Dorsolateral prefrontal cortex (tissue), 120 donors: ENCODE measurements at regions of chr13 and their contacts with region 1.

Region 1: DNA sequence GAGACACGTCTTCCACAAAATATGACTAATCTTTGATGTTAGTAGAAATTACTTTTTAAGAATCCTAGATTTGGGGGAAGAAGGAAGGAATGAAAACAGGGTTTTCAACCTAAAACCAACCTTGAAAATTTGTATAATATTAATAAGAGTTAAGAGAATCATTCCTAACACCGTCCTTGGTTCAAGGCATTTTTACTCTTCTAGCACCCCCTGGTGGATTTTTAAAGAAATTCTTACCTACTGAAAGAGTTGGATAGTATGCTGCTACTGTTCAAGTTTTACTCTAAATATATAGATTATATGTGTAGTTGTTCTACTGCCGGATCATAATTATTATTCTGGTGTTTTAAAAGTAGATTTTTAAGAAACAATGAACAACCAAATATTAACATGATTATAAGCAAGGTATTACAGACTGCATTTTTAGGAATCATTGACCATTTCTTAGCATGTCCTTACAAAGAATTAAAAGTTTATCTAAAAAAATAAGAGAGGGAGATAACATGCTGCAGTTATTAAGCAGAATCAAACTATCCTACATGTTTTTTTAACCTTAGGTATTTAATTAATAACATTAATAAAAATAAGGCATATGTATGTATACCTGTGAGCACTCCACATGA is 7.4 kb upstream of the SLITRK6 start:
- DNase-seq: no peak
- H3K4me3 ChIP-seq: peak overlapping the region in 1 of 59 donors; percentile 24
- H3K27ac ChIP-seq: no peak overlapping the region
- H3K27me3 ChIP-seq: peaks cover 0 to 6% (median 0%) of the 10 kb centered on the region in 45 donors
- CTCF ChIP-seq: peak; percentile 65 to 98 (median 86)

Region 2: DNA sequence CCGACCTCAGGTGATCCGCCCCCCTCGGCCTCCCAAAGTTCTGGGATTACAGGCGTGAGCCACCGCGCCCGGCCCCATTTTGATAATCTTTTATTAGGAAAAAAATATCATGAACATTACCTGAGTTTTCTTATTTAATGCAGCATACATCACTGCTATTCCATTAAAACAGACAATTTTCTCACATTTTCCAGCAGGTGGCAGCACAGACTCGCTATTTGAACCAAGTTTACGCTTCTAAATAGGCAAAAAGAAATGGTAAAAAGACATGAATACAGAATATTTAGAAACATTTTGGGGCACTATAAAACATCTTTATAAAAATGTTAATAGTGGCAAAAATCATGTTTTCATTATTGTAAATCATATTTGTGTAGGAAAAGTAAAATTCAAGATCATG is 910.5 kb before region 1 on chr13:
- intact Hi-C with region 1: loop called in 1 of 2 experiments (anchors 5 kb)
- DNase-seq: peak in 2 of 10 donors; percentile 28 to 33
- H3K4me3 ChIP-seq: no peak overlapping the region
- H3K27ac ChIP-seq: no peak overlapping the region
- H3K27me3 ChIP-seq: no peaks in the 10 kb centered on the region
- CTCF ChIP-seq: peak; percentile 60 to 85 (median 74)

Region 3: DNA sequence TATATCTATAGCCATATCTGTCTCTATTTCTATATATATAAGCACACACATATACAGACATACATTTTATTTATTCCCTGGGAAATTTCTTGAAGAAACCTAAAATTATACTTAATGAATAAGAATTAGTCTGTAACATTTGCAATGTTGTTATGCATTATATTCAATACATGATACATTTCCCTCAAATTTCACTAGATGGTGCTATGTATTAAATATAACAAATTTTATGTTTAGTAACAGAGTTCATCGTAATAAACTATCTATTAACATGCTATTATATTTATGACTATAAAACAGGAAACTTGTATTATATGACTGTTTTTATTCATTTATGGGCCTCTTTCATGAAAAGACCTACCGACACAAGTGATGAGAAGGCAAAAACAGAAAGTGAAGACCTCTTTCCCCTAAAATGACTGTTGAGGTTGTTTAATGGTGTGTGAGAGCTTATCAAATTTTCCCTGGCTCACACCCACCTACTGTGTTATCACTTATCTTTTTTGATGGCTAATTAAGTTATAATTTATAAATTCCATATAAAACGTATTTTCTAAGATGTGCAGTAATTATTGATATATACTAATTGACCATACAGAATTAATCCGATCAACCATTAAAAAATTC is 889.3 kb before region 1 on chr13:
- intact Hi-C with region 1: loop called (anchors 5 kb)
- DNase-seq: no peak
- H3K4me3 ChIP-seq: peak overlapping the region in 8 of 59 donors; percentile 16 to 49 (median 28)
- H3K27ac ChIP-seq: no peak overlapping the region
- H3K27me3 ChIP-seq: no peaks in the 10 kb centered on the region
- CTCF ChIP-seq: peak; percentile 43 to 91 (median 64)